MCF 10A (cell line): ENCODE measurements at regions of chr22 and their contacts with region 1.

Region 1: GRCh38 chr22:45246060-45246985 is 5.6 kb upstream of the KIAA0930 start:
- DNase-seq: peak; percentile 96
- H3K4me3 Mint-ChIP-seq: peak overlapping the region; percentile 40
- H3K27ac Mint-ChIP-seq: peak overlapping the region; percentile 95
- H3K4me1 Mint-ChIP-seq: peaks cover 13% of the 10 kb centered on the region
- H3K27me3 Mint-ChIP-seq: no peaks in the 10 kb centered on the region
- CTCF ChIP-seq: no peak

Region 2: DNA sequence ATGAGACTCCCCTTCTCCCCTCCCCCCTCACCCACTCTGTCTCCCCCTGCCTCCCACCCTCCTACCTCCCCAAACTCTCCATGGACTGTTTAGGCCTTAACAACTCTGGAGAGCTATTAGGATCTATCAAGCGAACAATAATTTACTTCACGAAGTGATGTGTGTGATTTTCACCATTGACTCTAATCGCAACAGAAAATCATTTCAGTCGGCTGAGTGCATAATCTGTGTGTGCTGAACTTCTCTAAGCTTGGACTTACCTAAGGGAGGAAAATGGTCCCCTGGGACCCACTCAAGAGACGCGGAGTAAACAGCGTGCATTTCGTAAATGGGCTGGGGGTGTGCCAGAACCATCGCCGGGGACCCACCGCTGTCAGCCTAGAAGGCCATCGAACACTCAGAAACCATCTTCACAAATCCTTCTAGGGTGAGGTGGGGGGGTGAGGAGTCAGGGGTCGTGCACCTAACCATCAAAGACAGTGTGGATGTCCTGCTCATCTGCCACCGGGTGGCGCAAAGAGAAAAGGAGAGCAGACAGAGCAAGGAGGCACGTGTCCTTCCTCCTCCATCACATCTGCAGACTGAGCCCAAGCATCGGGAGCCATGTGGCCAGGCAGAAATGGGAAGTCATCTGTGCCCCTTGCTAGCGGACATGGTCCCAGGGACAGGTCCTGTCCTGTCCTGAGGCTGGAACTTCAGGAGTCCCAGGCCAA is 144.7 kb before region 1 on chr22:
- CTCF ChIA-PET with region 1: interaction called, 4 read pairs
- POLR2A ChIA-PET with region 1: no interaction called
- intact Hi-C with region 1: loop called (anchors 5 kb)
- DNase-seq: peak; percentile 83
- H3K4me3 Mint-ChIP-seq: no peak overlapping the region
- H3K27ac Mint-ChIP-seq: no peak overlapping the region
- H3K4me1 Mint-ChIP-seq: peaks cover 10% of the 10 kb centered on the region
- H3K27me3 Mint-ChIP-seq: peaks cover 16% of the 10 kb centered on the region
- CTCF ChIP-seq: peak; percentile 51

Region 3: GRCh38 chr22:45208993-45209801 is 37.1 kb before region 1 on chr22:
- CTCF ChIA-PET with region 1: interaction called, 3 read pairs
- POLR2A ChIA-PET with region 1: interaction called, 5 read pairs
- intact Hi-C with region 1: loop called (anchors 2 kb)
- DNase-seq: peak; percentile 64
- H3K4me3 Mint-ChIP-seq: no peak overlapping the region
- H3K27ac Mint-ChIP-seq: no peak overlapping the region
- H3K4me1 Mint-ChIP-seq: peaks cover 17% of the 10 kb centered on the region
- H3K27me3 Mint-ChIP-seq: no peaks in the 10 kb centered on the region
- CTCF ChIP-seq: peak; percentile 93